Dorsolateral prefrontal cortex (tissue), 120 donors: ENCODE measurements at regions of chr5 and their contacts with region 1.

Region 1: GRCh38 chr5:142012792-142013388 is at the start of gene GNPDA1:
- DNase-seq: peak; percentile 69 to 92 (median 76)
- H3K4me3 ChIP-seq: peak within 1 kb of the TSS; percentile 70 to 97 (median 86)
- H3K27ac ChIP-seq: peak within 1 kb of the TSS; percentile 83 to 99 (median 96)
- H3K27me3 ChIP-seq: no peaks in the 10 kb centered on the region
- CTCF ChIP-seq: peak in 21 of 56 donors; percentile 8 to 55 (median 29)
- total RNA-seq, gene GNPDA1: 20.5 to 56.1 (median 37.9) TPM

Region 2: GRCh38 chr5:141636413-141637122 is 376.3 kb before region 1 on chr5 and contains the starts of genes HDAC3 and RELL2:
- intact Hi-C with region 1: no loop called
- DNase-seq: peak; percentile 90 to 98 (median 94)
- H3K4me3 ChIP-seq: peak within 1 kb of the TSS; percentile 57 to 96 (median 88)
- H3K27ac ChIP-seq: peak within 1 kb of the TSS in 51 of 59 donors; percentile 20 to 88 (median 65)
- H3K27me3 ChIP-seq: no peaks in the 10 kb centered on the region
- CTCF ChIP-seq: peak in 14 of 56 donors; percentile 5 to 40 (median 22)
- total RNA-seq, gene HDAC3: 44.4 to 98.2 (median 64.1) TPM
- total RNA-seq, gene RELL2: 12.9 to 64.8 (median 38.0) TPM

Region 3: GRCh38 chr5:142108432-142109330 is 95.8 kb after region 1 on chr5 and contains the start of gene NDFIP1:
- intact Hi-C with region 1: loop called (anchors 1 to 5 kb)
- DNase-seq: peak; percentile 63 to 90 (median 75)
- H3K4me3 ChIP-seq: peak within 1 kb of the TSS; percentile 54 to 97 (median 85)
- H3K27ac ChIP-seq: peak within 1 kb of the TSS; percentile 87 to 100 (median 98)
- H3K27me3 ChIP-seq: no peaks in the 10 kb centered on the region
- CTCF ChIP-seq: peak in 39 of 56 donors; percentile 5 to 63 (median 29)
- total RNA-seq, gene NDFIP1: 89.7 to 309 (median 217) TPM